ENCODE measurements at regions of chr4 and their contacts with region 1.

Region 1: DNA sequence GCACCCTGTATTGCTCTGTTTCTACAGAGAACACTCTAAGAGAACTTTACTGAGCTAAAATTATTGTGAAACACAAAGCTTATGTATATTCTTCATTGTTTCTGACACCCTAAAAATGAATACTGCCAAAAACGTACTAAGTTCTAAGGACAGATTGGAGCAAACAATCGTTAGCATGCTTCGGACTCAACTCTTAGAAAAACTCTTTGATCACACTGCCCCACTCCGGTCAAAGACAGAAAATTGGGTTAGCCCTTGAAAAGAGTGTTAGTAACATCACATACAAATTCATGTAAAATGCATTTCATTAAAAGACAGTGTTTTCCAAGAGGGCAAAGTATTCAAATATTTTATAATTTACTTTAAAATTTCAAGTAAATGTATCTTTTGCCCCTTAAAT is 177.4 kb downstream of the DCHS2 start:
- DNase-seq: peak; percentile 36
- H3K4me3 ChIP-seq: no peak overlapping the region
- H3K27ac ChIP-seq: no peak overlapping the region
- H3K4me1 ChIP-seq: no peaks in the 10 kb centered on the region
- H3K27me3 ChIP-seq: no peaks in the 10 kb centered on the region
- CTCF ChIP-seq: no peak
- POLR2A ChIP-seq: no peak

Region 2: DNA sequence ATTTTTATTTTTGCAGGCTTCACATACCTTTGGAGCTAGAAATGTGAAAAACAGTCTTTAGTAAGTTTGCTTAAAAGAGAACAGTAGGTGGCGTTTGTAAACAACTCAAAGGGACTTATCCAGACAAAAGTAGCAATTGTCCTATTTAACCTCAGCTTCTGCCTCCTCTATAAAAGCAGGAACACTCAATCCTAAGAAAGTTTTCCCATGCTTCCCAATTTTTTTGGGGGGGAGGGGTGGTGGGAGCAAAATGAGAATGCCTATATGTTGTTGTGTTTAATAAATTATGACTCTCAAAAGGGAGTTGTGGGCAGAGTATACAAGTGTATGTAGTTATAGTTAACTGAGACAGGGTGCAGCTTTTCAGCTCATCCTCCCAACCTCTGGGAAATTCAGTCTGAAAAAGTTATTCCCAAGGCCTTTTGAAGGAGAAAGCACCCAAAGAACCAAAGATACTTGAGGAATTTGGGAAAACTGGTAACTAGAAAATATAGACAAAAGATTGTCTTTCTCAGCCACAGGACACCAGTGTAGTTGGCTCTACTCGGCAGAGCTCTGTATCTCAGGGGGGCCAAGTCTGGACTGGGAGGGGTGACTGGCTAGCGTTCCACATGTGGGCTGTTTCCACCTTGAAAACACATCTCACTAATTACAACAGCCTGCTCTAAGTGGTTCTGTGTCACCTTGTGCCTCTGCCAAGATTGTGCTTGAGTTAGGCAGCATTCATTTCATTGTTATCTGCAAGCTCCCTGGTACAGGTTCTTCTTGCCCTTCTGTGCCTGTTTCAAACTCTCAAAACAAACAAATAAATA is 528.1 kb before region 1 on chr4:
- intact Hi-C with region 1: loop called (anchors 10 kb)
- DNase-seq: no peak
- H3K4me3 ChIP-seq: no peak overlapping the region
- H3K27ac ChIP-seq: no peak overlapping the region
- H3K4me1 ChIP-seq: peaks cover 12% of the 10 kb centered on the region
- H3K27me3 ChIP-seq: no peaks in the 10 kb centered on the region
- CTCF ChIP-seq: peak in 2 of 3 experiments; percentile 40 to 48
- POLR2A ChIP-seq: no peak

Region 3: GRCh38 chr4:154073107-154073822 is 241.0 kb before region 1 on chr4:
- intact Hi-C with region 1: no loop called
- DNase-seq: no peak
- H3K4me3 ChIP-seq: no peak overlapping the region
- H3K27ac ChIP-seq: no peak overlapping the region
- H3K4me1 ChIP-seq: no peaks in the 10 kb centered on the region
- H3K27me3 ChIP-seq: no peaks in the 10 kb centered on the region
- CTCF ChIP-seq: no peak
- POLR2A ChIP-seq: no peak

Region 4: GRCh38 chr4:154421618-154422017 is 107.4 kb after region 1 on chr4:
- intact Hi-C with region 1: no loop called
- DNase-seq: no peak
- H3K4me3 ChIP-seq: no peak overlapping the region
- H3K27ac ChIP-seq: no peak overlapping the region
- H3K4me1 ChIP-seq: no peaks in the 10 kb centered on the region
- H3K27me3 ChIP-seq: no peaks in the 10 kb centered on the region
- CTCF ChIP-seq: no peak
- POLR2A ChIP-seq: no peak

Measured in testis (tissue), 5 donors.